CD4-positive, alpha-beta T cell (primary cell): ENCODE measurements at regions of chr3 and their contacts with region 1.

Region 1: DNA sequence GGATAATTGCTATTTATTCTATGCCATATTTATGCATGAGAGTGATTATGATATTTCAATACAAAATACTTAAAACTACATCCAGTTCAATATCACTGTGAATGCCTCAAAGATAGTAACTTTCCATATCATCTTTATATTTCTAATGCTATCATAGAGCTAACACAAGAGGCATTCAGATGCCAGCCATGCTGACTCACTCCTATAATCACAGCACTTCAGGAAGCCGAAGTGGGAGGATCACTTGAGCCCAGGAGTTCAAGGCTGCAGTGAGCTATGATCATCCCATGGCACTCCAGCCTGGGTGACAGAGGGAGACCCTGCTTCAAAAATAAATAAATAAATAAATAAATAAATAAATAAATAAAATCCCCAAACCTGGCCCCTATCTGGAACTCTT is 498.7 kb downstream of the EPHA3 start:
- DNase-seq: no peak
- ATAC-seq: no peak
- H3K4me3 ChIP-seq: no peak overlapping the region
- H3K4me3 Mint-ChIP-seq: no peak overlapping the region
- H3K27ac ChIP-seq: no peak overlapping the region
- H3K27ac Mint-ChIP-seq: no peak overlapping the region
- H3K4me1 ChIP-seq: no peaks in the 10 kb centered on the region
- H3K4me1 Mint-ChIP-seq: no peaks in the 10 kb centered on the region
- H3K27me3 ChIP-seq: no peaks in the 10 kb centered on the region
- H3K27me3 Mint-ChIP-seq: no peaks in the 10 kb centered on the region
- CTCF ChIP-seq: no peak

Region 2: DNA sequence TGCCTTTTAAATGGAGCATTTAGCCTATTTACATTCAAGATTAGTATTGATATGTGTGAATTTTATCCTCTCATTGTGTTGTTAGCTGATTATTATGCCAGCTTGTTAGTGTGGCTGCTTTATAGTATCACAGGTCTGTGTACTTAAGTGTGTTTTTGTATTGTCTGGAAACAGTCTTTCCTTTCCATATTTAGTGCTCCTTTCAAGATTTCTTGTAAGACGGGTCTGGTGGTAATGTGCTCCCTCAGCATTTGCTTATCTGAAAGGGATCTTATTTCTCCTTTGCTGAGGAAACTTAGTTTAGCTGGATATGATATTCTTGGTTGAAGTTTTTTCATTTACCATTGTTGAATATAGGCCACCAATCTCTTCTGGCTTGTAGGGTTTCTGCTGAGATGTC is 50.2 kb after region 1 on chr3:
- CTCF ChIA-PET with region 1: no interaction called
- POLR2A ChIA-PET with region 1: no interaction called
- intact Hi-C with region 1: loop called in 1 of 2 experiments (anchors 5 kb)
- DNase-seq: no peak
- ATAC-seq: no peak
- H3K4me3 ChIP-seq: no peak overlapping the region
- H3K4me3 Mint-ChIP-seq: no peak overlapping the region
- H3K27ac ChIP-seq: no peak overlapping the region
- H3K27ac Mint-ChIP-seq: no peak overlapping the region
- H3K4me1 ChIP-seq: no peaks in the 10 kb centered on the region
- H3K4me1 Mint-ChIP-seq: no peaks in the 10 kb centered on the region
- H3K27me3 ChIP-seq: no peaks in the 10 kb centered on the region
- H3K27me3 Mint-ChIP-seq: no peaks in the 10 kb centered on the region
- CTCF ChIP-seq: no peak